Activated CD4-positive, alpha-beta memory T cell treated with anti-CD3 and anti-CD28 coated beads, Interleukin-2, amount 10 ng/mL, durations not matched to agents 7 days and 5 days (primary cell): ENCODE measurements at regions of chr19 and their contacts with region 1.

Region 1: GRCh38 chr19:10510301-10510802 is 6.9 kb downstream of the S1PR5 start:
- DNase-seq: peak; percentile 63
- H3K4me3 Mint-ChIP-seq: no peak overlapping the region
- H3K27ac Mint-ChIP-seq: no peak overlapping the region
- H3K4me1 Mint-ChIP-seq: peaks cover 25% of the 10 kb centered on the region
- H3K27me3 Mint-ChIP-seq: peaks cover 30% of the 10 kb centered on the region

Region 2: GRCh38 chr19:10543420-10544241 is 33.3 kb after region 1 on chr19 and contains the start of gene ATG4D:
- CTCF ChIA-PET with region 1: interaction called, 13 read pairs
- POLR2A ChIA-PET with region 1: no interaction called
- DNase-seq: peak; percentile 83
- H3K4me3 Mint-ChIP-seq: peak within 1 kb of the TSS; percentile 91
- H3K27ac Mint-ChIP-seq: peak within 1 kb of the TSS; percentile 84
- H3K4me1 Mint-ChIP-seq: peaks cover 16% of the 10 kb centered on the region
- H3K27me3 Mint-ChIP-seq: peaks cover 16% of the 10 kb centered on the region
- total RNA-seq, gene ATG4D: 38.1 to 39.2 TPM

Region 3: GRCh38 chr19:10551698-10552301 is 41.4 kb after region 1 on chr19:
- CTCF ChIA-PET with region 1: interaction called, 17 read pairs
- POLR2A ChIA-PET with region 1: interaction called, 6 read pairs
- DNase-seq: peak; percentile 63
- H3K4me3 Mint-ChIP-seq: no peak overlapping the region
- H3K27ac Mint-ChIP-seq: peak overlapping the region; percentile 56
- H3K4me1 Mint-ChIP-seq: peaks cover 52% of the 10 kb centered on the region
- H3K27me3 Mint-ChIP-seq: no peaks in the 10 kb centered on the region

Region 4: GRCh38 chr19:10644260-10645007 is 134.1 kb after region 1 on chr19:
- CTCF ChIA-PET with region 1: no interaction called
- POLR2A ChIA-PET with region 1: no interaction called
- DNase-seq: peak; percentile 83
- H3K4me3 Mint-ChIP-seq: no peak overlapping the region
- H3K27ac Mint-ChIP-seq: no peak overlapping the region
- H3K4me1 Mint-ChIP-seq: peaks cover 3% of the 10 kb centered on the region
- H3K27me3 Mint-ChIP-seq: no peaks in the 10 kb centered on the region